PC-3 (cell line): ENCODE measurements at regions of chr9 and their contacts with region 1.

Region 1: GRCh38 chr9:104927912-104928740 is at the start of gene ABCA1:
- DNase-seq: peak; percentile 58
- ATAC-seq: peak; percentile 55
- H3K4me3 ChIP-seq: peak within 1 kb of the TSS; percentile 88
- H3K27ac ChIP-seq: peak within 1 kb of the TSS; percentile 43
- H3K4me1 ChIP-seq: no peaks in the 10 kb centered on the region
- H3K27me3 ChIP-seq: no peaks in the 10 kb centered on the region
- CTCF ChIP-seq: no peak
- total RNA-seq, gene ABCA1: 2.3 and 2.5 TPM in 2 replicates

Region 2: GRCh38 chr9:104863180-104863883 is 64.8 kb before region 1 on chr9:
- CTCF ChIA-PET with region 1: interaction called, 8 read pairs
- POLR2A ChIA-PET with region 1: no interaction called
- intact Hi-C with region 1: loop called (anchors 1 kb)
- DNase-seq: peak; percentile 79
- ATAC-seq: peak; percentile 93
- H3K4me3 ChIP-seq: no peak overlapping the region
- H3K27ac ChIP-seq: peak overlapping the region; percentile 27
- H3K4me1 ChIP-seq: peaks cover 22% of the 10 kb centered on the region
- H3K27me3 ChIP-seq: no peaks in the 10 kb centered on the region
- CTCF ChIP-seq: peak; percentile 85

Region 3: DNA sequence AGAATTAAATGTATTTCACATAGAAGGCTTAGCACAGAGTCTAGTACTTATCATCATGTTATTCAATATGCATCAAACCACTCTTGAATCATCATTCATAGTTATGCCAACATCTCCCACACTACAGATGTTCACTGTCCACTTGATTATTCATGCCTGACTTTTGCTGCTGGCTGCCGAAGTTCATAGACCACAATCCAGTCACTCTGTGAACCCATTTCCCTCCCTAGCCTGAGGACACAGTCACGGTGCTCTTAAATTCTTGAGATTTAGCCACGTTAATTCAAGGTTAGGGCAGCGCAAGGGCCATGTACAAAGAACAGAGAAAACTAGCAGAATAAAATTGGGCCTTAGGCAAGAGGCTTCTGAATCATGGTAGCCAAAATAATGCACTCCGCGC is 32.6 kb before region 1 on chr9:
- CTCF ChIA-PET with region 1: no interaction called
- POLR2A ChIA-PET with region 1: no interaction called
- intact Hi-C with region 1: no loop called
- DNase-seq: peak; percentile 59
- ATAC-seq: peak; percentile 24; the same call in 1 of the 2 replicates
- H3K4me3 ChIP-seq: no peak overlapping the region
- H3K27ac ChIP-seq: no peak overlapping the region
- H3K4me1 ChIP-seq: 0 out of 2 replicates have a peak, but pooled peaks cover 4% of the 10 kb centered on the region
- H3K27me3 ChIP-seq: no peaks in the 10 kb centered on the region
- CTCF ChIP-seq: no peak

Region 4: GRCh38 chr9:104991144-104991953 is 63.2 kb after region 1 on chr9:
- CTCF ChIA-PET with region 1: no interaction called
- POLR2A ChIA-PET with region 1: interaction called, 4 read pairs
- intact Hi-C with region 1: loop called (anchors 2 kb)
- DNase-seq: peak; percentile 68
- ATAC-seq: peak; percentile 80
- H3K4me3 ChIP-seq: peak overlapping the region; percentile 88
- H3K27ac ChIP-seq: peak overlapping the region; percentile 90
- H3K4me1 ChIP-seq: peaks cover 17% of the 10 kb centered on the region
- H3K27me3 ChIP-seq: no peaks in the 10 kb centered on the region
- CTCF ChIP-seq: no peak

Region 5: DNA sequence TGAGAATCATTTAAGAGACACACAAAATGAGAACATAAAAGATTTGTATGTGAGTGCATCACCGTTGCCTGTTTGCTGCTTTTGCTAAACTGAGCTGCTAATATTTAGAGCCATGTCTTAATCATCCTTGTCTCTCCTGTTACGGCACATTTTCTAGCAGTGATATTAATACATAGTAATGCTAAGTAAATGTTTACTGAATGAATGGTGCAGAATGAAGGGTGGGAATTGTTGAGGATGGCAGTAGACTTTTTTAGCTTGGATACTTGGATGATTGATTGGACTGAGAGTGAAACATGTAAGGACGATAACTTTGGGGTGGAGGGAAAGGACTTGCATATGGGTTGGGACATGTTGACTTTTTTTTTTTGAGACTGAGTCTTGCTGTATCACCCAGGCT is 102.2 kb after region 1 on chr9:
- CTCF ChIA-PET with region 1: no interaction called
- POLR2A ChIA-PET with region 1: no interaction called
- intact Hi-C with region 1: no loop called
- DNase-seq: no peak
- ATAC-seq: no peak
- H3K4me3 ChIP-seq: no peak overlapping the region
- H3K27ac ChIP-seq: no peak overlapping the region
- H3K4me1 ChIP-seq: no peaks in the 10 kb centered on the region
- H3K27me3 ChIP-seq: no peaks in the 10 kb centered on the region
- CTCF ChIP-seq: no peak

Region 6: GRCh38 chr9:105087910-105088888 is 160.1 kb after region 1 on chr9:
- CTCF ChIA-PET with region 1: interaction called, 5 read pairs
- POLR2A ChIA-PET with region 1: no interaction called
- intact Hi-C with region 1: loop called (anchors 10 kb)
- DNase-seq: peak; percentile 38
- ATAC-seq: peak; percentile 51; the same call in 1 of the 2 replicates
- H3K4me3 ChIP-seq: no peak overlapping the region
- H3K27ac ChIP-seq: no peak overlapping the region
- H3K4me1 ChIP-seq: no peaks in the 10 kb centered on the region; the same call in 1 of the 2 replicates
- H3K27me3 ChIP-seq: no peaks in the 10 kb centered on the region
- CTCF ChIP-seq: no peak

Region 7: DNA sequence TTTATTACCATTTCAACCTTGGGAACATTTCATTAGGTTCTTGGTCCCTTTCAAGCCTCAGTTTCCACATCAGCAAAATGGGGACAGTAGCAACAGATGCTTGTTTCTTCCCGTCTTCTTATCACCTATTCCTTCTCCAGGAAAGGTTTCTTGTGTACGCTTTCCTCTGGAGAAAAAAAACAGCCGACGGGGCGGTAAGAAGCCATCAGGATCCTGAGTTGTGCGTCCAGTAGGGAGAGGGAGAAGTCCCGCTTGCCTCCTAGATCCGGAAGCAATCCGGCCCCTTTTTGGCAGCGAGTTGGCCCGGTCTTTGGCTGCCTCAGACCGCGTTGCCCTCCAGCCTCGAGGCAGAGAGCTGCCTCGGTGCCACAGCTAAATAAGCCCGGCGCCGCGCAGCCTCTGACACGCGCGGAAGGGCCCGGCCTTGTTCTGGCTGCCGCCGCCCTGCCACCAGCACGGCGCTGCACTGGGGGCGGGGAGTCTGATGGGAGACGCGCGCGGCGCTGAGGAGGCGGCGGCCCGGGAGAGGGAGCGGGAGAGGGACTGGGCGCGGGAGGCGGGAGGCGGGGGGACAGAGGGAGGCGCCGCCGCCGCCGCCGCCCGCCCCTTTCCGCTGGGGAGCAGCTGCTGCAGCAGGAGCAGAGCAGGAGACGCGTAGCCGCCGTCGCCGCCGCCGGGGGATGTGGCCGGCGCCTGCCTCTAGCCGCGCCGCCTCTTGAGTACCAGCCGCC is 316.0 kb after region 1 on chr9 and contains the start of gene SLC44A1:
- CTCF ChIA-PET with region 1: no interaction called
- POLR2A ChIA-PET with region 1: no interaction called
- intact Hi-C with region 1: loop called (anchors 5 kb)
- DNase-seq: peak; percentile 90
- ATAC-seq: peak; percentile 92
- H3K4me3 ChIP-seq: peak within 1 kb of the TSS; percentile 87
- H3K27ac ChIP-seq: peak within 1 kb of the TSS; percentile 48
- H3K4me1 ChIP-seq: peaks cover 11% of the 10 kb centered on the region
- H3K27me3 ChIP-seq: no peaks in the 10 kb centered on the region
- CTCF ChIP-seq: no peak
- total RNA-seq, gene SLC44A1: 15.3 and 16.1 TPM in 2 replicates

Region 8: GRCh38 chr9:105541838-105542237 is 613.7 kb after region 1 on chr9:
- CTCF ChIA-PET with region 1: no interaction called
- POLR2A ChIA-PET with region 1: interaction called, 13 read pairs
- intact Hi-C with region 1: no loop called
- DNase-seq: no peak
- ATAC-seq: no peak
- H3K4me3 ChIP-seq: no peak overlapping the region
- H3K27ac ChIP-seq: no peak overlapping the region
- H3K4me1 ChIP-seq: no peaks in the 10 kb centered on the region
- H3K27me3 ChIP-seq: no peaks in the 10 kb centered on the region
- CTCF ChIP-seq: no peak